HEK293T (cell line): ENCODE measurements at regions of chr10 and their contacts with region 1.

Region 1: GRCh38 chr10:104291439-104291951 is 22.5 kb downstream of the GSTO2 start:
- DNase-seq: peak; percentile 96

Region 2: GRCh38 chr10:104353325-104354048 is 62.0 kb after region 1 on chr10 and contains the start of gene CFAP58:
- CTCF ChIA-PET with region 1: interaction called, 21 read pairs
- POLR2A ChIA-PET with region 1: interaction called, 3 read pairs
- DNase-seq: peak; percentile 99